Cardiac septum (tissue), 1 donor: ENCODE measurements at regions of chr9 and their contacts with region 1.

Region 1: DNA sequence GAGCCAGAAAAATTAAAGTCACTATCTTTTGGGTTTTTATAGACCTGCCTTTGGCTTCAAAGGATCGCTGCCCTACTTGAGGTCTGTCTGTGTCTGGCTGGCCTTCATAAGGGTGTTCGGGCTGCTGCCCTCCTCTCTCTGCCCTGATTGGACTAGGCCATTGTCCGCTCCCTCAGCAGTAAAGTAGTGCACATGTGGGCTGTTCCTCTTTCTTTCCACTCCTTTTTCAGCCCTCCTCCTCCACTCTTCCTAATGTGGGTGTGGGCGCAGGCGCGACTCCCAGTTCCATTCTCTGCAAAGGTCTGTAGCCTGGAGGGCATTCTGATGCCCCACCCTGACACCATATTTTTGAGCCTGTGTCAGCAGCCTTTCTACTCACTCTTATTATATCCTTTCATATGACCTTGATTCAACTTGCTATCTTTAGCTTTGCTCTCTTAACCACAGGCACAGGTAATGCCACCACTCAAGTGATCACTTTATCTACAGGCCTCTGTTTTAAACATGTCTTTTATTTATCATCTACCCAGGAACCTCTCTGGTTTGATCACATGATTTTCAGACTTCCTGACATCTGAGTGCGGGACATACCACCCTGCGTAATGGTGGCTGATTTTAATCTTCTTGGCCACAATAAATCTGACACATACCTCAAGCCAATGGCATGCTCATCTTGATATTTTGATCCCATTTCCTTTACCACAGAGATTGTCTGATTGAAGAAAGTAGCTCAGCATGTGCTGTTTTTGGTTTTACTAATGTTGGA is 144.5 kb downstream of the AOPEP start:
- DNase-seq: peak; percentile 87

Region 2: DNA sequence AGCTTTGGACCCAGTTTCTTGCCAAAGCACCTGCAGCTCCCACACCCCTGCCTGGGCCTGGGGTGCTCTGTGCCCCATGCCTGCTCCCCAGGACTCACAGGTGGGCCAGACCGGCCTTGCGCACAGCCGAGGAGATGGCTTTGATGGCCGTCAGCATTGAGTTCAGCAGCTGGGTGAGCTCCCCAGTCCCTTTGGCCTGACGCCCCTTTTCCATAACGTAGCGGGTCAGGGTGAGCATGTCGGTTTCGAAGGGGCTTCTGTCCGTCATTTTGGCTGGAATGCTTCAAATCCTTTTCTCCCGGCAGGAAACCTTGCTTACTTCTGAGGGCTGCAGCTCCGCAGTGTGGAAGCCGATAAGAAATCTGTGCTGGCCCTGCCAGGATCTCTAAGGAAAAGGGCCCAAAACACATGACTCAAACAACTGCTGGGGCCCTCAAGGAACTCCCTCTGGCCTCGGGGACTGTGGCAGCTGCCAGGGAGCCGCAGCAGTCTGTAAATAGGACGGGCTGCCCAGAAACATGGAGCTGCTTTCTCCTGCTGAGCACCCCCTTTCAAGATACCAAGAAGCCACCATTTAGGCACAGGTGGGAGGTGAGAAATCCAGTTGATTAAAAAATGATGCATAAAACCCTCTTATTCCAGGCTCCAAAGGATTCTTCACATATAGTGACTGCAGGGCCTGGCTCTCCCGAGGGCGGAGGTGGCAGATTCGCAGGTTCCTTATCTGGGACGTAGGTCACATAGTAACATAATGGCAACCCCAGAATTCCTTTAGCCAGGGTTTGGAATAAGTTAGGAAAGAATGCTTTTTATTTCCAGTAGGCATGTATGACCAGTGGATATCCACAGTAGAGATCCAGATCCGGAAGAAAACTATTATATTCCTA is 277.3 kb before region 1 on chr9 and contains the start of gene FBP2:
- intact Hi-C with region 1: no loop called
- DNase-seq: peak; percentile 12
- total RNA-seq, gene FBP2: not detected

Region 3: DNA sequence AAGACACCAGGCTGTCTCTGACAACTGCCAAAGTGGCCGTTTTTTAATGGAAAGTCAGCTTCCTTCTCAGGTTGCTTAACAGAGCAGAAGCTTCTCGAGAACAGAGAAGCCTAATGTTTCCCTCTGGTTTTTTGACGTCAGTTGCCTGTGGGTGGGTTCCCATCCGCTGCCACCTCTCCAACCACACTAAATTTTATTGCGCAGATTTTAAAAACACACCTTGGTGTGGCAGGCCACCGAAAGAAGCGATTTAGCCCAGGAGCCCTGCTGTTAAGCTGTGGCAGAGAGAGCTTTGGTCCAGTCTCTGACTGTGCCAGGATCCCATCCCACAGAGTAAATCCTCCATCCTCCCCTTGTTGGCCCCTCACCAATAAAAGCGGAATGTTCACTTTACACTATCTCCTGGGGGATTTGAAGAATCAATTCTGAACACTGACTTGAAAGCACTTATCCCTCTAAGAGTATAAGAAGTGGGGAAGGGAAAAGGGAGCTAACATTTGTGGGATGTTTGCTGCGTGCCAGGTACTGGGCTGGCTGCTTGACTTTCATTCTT is 37.1 kb after region 1 on chr9:
- intact Hi-C with region 1: loop called (anchors 5 kb)
- DNase-seq: no peak

Region 4: DNA sequence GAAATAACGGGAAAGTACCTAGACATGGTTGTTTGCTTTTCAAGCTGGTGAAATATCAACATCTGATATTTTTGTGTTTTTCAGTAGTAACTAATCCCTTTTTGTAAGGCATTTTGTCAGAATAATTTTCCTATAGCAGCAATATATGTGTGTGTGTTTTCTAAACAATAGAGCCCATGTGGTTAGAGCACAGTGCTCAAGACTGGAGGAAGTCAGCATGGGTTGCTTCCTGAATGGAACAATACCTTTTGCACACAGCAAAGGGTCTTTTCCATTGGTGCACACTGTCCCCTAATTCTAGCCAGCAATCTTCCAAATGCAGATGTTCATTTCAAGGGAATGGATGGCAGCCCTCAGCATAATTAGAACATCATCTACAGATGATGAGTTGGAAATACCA is 125.7 kb after region 1 on chr9:
- intact Hi-C with region 1: loop called (anchors 2 kb)
- DNase-seq: no peak

Region 5: DNA sequence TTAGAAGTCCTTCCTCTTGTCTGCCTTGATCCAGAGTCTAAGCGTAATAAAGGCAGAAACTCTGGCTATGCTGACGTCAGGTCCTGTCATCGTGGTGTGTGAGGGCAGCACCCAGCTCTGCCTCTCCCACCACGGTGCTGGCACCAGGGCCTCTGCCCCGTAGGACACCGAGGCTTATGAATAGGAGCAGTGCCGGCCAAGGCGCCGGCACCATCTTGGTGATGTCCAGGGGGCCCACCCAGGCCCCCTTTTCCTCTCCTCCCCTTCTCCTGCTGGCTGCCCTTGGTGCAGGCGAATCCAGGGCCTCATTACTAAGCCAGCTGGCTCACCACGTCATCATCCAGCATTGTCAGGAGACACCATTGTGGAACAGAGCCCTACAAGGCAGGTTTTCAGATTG is 194.2 kb after region 1 on chr9:
- intact Hi-C with region 1: no loop called
- DNase-seq: no peak